ENCODE measurements at regions of chr2 and their contacts with region 1.

Region 1: GRCh38 chr2:12555012-12555645 is 161.6 kb upstream of the TRIB2 start:
- DNase-seq: peak; percentile 85
- H3K4me3 ChIP-seq: no peak overlapping the region
- H3K27ac ChIP-seq: no peak overlapping the region
- H3K4me1 ChIP-seq: peaks cover 23% of the 10 kb centered on the region
- H3K27me3 ChIP-seq: no peaks in the 10 kb centered on the region
- CTCF ChIP-seq: no peak
- POLR2A ChIP-seq: no peak

Region 2: DNA sequence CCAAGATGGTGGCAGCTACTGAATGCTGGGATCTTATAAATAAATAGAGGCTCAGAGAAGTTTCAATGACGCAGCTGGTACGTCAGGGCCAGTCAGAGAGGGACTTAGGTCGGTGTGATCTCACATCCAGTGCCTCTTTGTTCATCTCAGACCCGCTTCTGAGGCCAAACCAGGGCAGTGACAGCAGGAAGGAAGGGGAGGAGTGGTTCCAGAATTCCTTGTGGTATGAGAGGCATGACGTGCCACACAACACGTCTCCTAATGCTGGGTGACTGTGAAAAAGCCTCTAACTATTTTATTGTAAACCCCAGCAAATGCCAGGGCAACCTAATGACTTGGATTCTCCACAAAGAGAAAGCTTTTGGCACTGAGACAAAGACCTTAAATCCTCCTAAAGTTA is 385.4 kb before region 1 on chr2:
- CTCF ChIA-PET with region 1: no interaction called
- POLR2A ChIA-PET with region 1: no interaction called
- dilution Hi-C with region 1: no loop called
- intact Hi-C with region 1: loop called (anchors 5 kb)
- DNase-seq: peak; percentile 76
- H3K4me3 ChIP-seq: no peak overlapping the region
- H3K27ac ChIP-seq: peak overlapping the region; percentile 24
- H3K4me1 ChIP-seq: peaks cover 19% of the 10 kb centered on the region
- H3K27me3 ChIP-seq: no peaks in the 10 kb centered on the region
- CTCF ChIP-seq: no peak
- POLR2A ChIP-seq: no peak

Region 3: GRCh38 chr2:12479065-12479601 is 76.0 kb before region 1 on chr2:
- CTCF ChIA-PET with region 1: no interaction called
- POLR2A ChIA-PET with region 1: no interaction called
- dilution Hi-C with region 1: no loop called
- intact Hi-C with region 1: loop called (anchors 1 kb)
- DNase-seq: peak; percentile 69
- H3K4me3 ChIP-seq: peak overlapping the region in 1 of 3 experiments; percentile 11
- H3K27ac ChIP-seq: peak overlapping the region; percentile 82
- H3K4me1 ChIP-seq: peaks cover 20% of the 10 kb centered on the region
- H3K27me3 ChIP-seq: no peaks in the 10 kb centered on the region
- CTCF ChIP-seq: no peak
- POLR2A ChIP-seq: no peak

Measured in endothelial cell of umbilical vein (primary cell).